Heart right ventricle (tissue), 16 donors: ENCODE measurements at regions of chr4 and their contacts with region 1.

Region 1: DNA sequence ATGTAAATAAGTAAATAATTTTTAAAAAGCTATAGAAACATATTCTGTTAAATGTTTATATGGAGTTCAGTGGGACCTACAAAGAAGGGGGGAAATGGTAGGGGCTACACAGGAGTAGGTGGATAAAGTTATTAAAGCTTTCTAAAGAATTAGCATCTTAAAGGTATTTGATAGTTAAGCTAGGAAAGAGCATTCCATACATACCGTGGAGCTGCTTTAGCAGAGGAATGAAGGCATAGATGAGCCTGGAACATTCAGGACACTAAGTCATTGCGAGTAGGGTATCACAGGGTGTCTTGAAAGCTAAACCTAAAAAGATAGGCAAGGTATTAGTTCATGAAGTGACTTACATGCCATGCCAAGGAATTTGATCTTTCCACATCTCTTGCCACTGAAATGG is 60.4 kb downstream of the SLC10A6 start:
- DNase-seq: no peak
- ATAC-seq: no peak
- H3K4me3 ChIP-seq: no peak overlapping the region
- H3K27ac ChIP-seq: no peak overlapping the region
- H3K4me1 ChIP-seq: no peaks in the 10 kb centered on the region
- H3K27me3 ChIP-seq: no peaks in the 10 kb centered on the region
- CTCF ChIP-seq: no peak

Region 2: GRCh38 chr4:86497980-86498862 is 290.6 kb before region 1 on chr4:
- intact Hi-C with region 1: loop called in 1 of 10 experiments (anchors 10 kb)
- DNase-seq: peak in 1 of 2 donors; percentile 13
- ATAC-seq: peak; percentile 68 to 90 (median 84)
- H3K4me3 ChIP-seq: no peak overlapping the region
- H3K27ac ChIP-seq: peak overlapping the region in 2 of 10 donors; percentile 23 to 44
- H3K4me1 ChIP-seq: peaks cover 0 to 14% (median 6%) of the 10 kb centered on the region in 9 donors
- H3K27me3 ChIP-seq: peaks cover 0 to 5% (median 0%) of the 10 kb centered on the region in 7 donors
- CTCF ChIP-seq: peak; percentile 64 to 86 (median 78)

Region 3: GRCh38 chr4:87130985-87131703 is 342.3 kb after region 1 on chr4:
- intact Hi-C with region 1: no loop called
- DNase-seq: no peak
- ATAC-seq: no peak
- H3K4me3 ChIP-seq: no peak overlapping the region
- H3K27ac ChIP-seq: no peak overlapping the region
- H3K4me1 ChIP-seq: peaks cover 0 to 37% (median 9%) of the 10 kb centered on the region in 9 donors
- H3K27me3 ChIP-seq: no peaks in the 10 kb centered on the region
- CTCF ChIP-seq: no peak